ENCODE measurements at regions of chr18 and their contacts with region 1.

Region 1: DNA sequence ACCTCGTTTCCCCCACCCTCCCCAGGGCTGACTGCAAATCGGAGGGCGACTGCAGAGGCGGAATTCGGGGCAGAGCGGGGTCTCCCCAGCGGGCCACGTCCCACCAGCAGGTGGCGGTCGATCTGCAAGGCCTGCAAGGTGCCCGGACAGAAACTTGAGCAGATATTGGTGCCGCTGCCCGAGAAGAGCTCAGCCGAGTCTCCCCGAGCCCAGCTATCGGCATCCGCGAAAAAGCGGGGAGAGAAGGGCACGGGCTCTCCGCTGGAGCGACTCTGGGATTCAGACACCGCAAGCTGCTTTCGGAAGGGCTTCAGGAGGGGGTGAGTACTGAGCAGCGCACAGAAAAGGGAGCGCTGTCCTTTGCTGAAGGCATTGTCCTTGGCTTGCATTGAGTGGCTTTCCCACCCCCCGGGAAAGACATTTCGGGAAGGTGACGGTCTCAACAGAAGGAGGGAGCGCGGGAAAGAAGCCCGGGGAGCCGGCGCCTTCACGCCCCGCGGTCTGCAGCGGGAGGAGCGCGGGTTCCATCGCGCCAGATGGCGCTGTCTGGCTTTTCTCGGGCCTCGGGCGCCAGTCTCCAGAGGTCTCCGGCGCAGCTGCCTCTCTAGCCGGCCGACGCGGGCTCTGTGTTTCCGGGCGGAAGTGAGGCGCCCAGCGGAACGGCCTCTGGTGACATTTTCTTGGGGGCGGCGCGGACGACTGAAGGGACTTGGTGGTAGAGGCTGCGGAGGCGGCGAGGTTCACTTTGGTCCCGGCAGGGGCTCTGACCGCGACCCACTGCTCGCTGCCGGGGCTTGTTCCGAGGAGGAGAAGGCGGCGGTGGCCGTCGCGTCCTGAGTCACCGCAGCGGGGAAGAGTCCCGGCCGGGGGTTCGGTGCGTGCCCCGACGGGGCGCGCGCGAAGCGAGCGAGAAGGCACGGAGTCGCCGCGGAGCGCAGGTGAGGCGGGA is 69.5 kb downstream of the HAUS1 start:
- DNase-seq: peak; percentile 95
- CTCF ChIP-seq: peak; percentile 91

Region 2: GRCh38 chr18:46148810-46149209 is 24.9 kb before region 1 on chr18:
- CTCF ChIA-PET with region 1: interaction called, 47 read pairs
- POLR2A ChIA-PET with region 1: no interaction called
- DNase-seq: peak; percentile 43
- CTCF ChIP-seq: peak; percentile 67

Region 3: GRCh38 chr18:46207985-46208384 is 34.3 kb after region 1 on chr18:
- CTCF ChIA-PET with region 1: interaction called, 30 read pairs
- POLR2A ChIA-PET with region 1: no interaction called
- DNase-seq: no peak
- CTCF ChIP-seq: no peak

Region 4: DNA sequence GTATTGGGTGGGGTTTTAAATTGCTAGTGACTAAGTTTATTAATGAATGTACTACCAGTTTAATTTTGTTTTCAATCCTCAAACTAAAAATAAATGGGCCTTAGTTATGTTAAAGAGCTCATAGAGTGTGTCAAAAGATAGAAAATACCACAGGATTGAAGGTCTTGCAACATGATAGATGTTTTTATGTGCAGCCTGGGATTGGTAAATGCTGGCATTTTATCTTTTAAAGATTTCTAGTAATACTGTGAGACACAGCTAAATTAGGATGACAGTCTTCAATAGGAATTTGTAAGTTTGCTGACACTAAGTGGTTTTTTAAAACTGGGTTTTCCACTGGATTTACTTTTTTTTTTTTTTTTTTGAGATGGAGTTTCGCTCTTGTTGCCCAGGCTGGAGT is 52.8 kb after region 1 on chr18:
- CTCF ChIA-PET with region 1: interaction called, 37 read pairs
- POLR2A ChIA-PET with region 1: no interaction called
- DNase-seq: no peak
- CTCF ChIP-seq: no peak

Region 5: GRCh38 chr18:46281185-46282176 is 107.8 kb after region 1 on chr18:
- CTCF ChIA-PET with region 1: interaction called, 14 read pairs
- POLR2A ChIA-PET with region 1: no interaction called
- DNase-seq: peak; percentile 71
- CTCF ChIP-seq: peak; percentile 90

Measured in GM10248 (cell line).